Transverse colon (tissue), 4 donors: ENCODE measurements at regions of chrX and their contacts with region 1.

Region 1: GRCh38 chrX:147476008-147476407 is 435.7 kb upstream of the FMR1 start:
- DNase-seq: peak; percentile 7
- H3K4me3 ChIP-seq: no peak overlapping the region
- H3K27ac ChIP-seq: no peak overlapping the region
- H3K4me1 ChIP-seq: no peaks in the 10 kb centered on the region
- H3K27me3 ChIP-seq: no peaks in the 10 kb centered on the region
- CTCF ChIP-seq: peak in 2 of 5 experiments; percentile 11 to 12
- EP300 ChIP-seq: no peak
- POLR2A ChIP-seq: no peak

Region 2: DNA sequence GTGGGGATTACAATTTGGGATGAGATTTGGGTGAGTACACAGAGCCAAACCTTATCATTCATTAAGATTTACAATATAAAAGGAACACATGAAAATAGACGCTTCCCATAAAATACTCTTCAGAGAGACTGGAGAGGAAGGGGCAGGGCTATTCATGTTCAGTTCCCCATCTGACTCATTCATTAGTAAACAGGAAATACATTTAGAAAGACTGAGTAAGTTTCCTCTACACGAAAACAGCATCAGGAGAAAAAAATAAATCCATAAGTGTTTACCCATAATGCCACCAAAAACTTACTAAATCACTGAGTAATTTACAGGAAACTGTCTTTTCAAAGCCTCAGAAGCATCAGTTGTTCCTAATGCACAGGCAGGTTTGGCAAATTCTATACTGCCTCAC is 406.1 kb before region 1 on chrX:
- in situ Hi-C with region 1: no loop called
- intact Hi-C with region 1: no loop called
- DNase-seq: no peak
- H3K4me3 ChIP-seq: no peak overlapping the region
- H3K27ac ChIP-seq: no peak overlapping the region
- H3K4me1 ChIP-seq: no peaks in the 10 kb centered on the region
- H3K27me3 ChIP-seq: no peaks in the 10 kb centered on the region
- CTCF ChIP-seq: no peak
- EP300 ChIP-seq: no peak
- POLR2A ChIP-seq: no peak

Region 3: GRCh38 chrX:147803948-147804347 is 327.9 kb after region 1 on chrX:
- in situ Hi-C with region 1: loop called in 2 of 4 experiments (anchors 10 to 25 kb)
- intact Hi-C with region 1: no loop called
- DNase-seq: no peak
- H3K4me3 ChIP-seq: no peak overlapping the region
- H3K27ac ChIP-seq: no peak overlapping the region
- H3K4me1 ChIP-seq: no peaks in the 10 kb centered on the region
- H3K27me3 ChIP-seq: no peaks in the 10 kb centered on the region
- CTCF ChIP-seq: peak in 4 of 5 experiments; percentile 16 to 39 (median 27)
- EP300 ChIP-seq: no peak
- POLR2A ChIP-seq: no peak

Region 4: DNA sequence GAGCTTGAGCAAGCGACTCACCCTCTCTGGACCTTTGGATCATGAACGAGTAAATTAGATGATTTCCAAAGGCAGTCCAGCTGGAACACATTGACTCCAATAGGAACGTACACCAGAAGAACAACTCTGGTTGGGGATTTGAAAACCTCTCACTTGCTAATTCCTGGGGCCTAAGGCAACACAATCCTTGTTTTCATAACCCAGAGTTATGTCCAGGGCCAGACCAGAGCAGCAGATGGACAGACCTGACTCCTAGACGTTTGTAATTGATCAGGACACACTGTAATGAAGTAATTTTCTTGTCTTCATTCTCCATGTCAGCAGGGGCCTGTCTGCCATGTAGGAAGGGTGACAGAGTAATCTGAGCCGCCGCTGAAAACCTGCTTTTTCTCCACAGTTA is 1745.2 kb after region 1 on chrX:
- in situ Hi-C with region 1: no loop called
- intact Hi-C with region 1: no loop called
- DNase-seq: no peak
- H3K4me3 ChIP-seq: no peak overlapping the region
- H3K27ac ChIP-seq: no peak overlapping the region
- H3K4me1 ChIP-seq: no peaks in the 10 kb centered on the region
- H3K27me3 ChIP-seq: no peaks in the 10 kb centered on the region
- CTCF ChIP-seq: no peak
- EP300 ChIP-seq: no peak
- POLR2A ChIP-seq: no peak